AG04449 (cell line): ENCODE measurements at regions of chr22 and their contacts with region 1.

Region 1: GRCh38 chr22:36065775-36066559 is 37.3 kb upstream of the RBFOX2 start:
- DNase-seq: peak; percentile 73
- H3K4me3 ChIP-seq: peak overlapping the region; percentile 62
- CTCF ChIP-seq: peak; percentile 84

Region 2: DNA sequence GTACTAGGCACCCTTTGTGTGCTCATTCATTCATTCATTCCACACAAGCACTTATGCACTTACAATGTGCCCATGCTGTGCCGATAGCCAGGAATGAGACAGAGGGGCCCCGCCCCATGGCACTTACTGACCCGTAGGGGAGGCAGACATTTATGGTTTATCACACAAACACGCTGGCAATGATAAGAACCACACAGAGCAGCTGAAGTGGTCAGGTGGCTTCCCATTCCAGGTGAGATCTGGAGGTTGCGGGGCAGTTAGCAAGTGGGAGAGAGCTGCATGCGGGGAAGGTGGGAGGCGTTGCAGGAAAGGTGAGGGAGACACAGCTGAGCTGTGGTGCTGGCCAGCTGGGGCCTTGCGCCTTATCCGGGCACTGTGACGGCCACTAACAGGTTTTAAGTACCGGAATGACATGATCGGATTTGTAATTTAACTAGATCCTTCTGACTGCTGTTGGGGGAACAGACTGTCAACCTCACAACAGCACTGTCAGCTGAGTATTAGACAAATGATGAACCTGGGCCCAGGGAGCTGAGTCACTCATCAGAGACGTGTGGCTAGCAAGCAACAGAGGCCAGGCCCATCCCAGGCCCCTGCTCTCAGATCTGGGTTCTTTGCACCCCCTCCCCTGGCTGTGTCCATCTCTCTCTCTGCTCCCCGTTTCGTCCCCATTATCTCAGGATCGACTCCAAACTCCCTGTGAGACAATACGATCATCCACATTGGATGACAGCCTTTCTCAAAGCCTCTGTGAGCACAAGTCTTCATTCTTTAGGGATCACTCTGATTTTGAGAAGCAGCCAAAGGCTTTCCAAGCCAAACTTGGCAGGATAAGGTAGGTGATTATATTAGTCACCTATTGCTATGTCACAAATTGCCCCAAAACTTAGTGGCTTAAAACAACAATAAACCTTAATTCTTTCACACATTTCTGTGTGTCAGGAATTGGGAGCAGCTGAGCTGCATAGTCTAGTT is 496.9 kb before region 1 on chr22:
- CTCF ChIA-PET with region 1: no interaction called
- POLR2A ChIA-PET with region 1: no interaction called
- DNase-seq: peak; percentile 31
- H3K4me3 ChIP-seq: no peak overlapping the region
- CTCF ChIP-seq: no peak

Region 3: GRCh38 chr22:35739076-35739930 is 326.7 kb before region 1 on chr22:
- CTCF ChIA-PET with region 1: no interaction called
- POLR2A ChIA-PET with region 1: no interaction called
- DNase-seq: no peak
- H3K4me3 ChIP-seq: no peak overlapping the region
- CTCF ChIP-seq: no peak

Region 4: GRCh38 chr22:35900483-35901168 is 165.3 kb before region 1 on chr22:
- CTCF ChIA-PET with region 1: interaction called, 25 read pairs
- POLR2A ChIA-PET with region 1: no interaction called
- DNase-seq: no peak
- H3K4me3 ChIP-seq: no peak overlapping the region
- CTCF ChIP-seq: no peak

Region 5: GRCh38 chr22:35938226-35938625 is 127.7 kb before region 1 on chr22:
- CTCF ChIA-PET with region 1: interaction called, 85 read pairs
- POLR2A ChIA-PET with region 1: no interaction called
- DNase-seq: no peak
- H3K4me3 ChIP-seq: no peak overlapping the region
- CTCF ChIP-seq: no peak

Region 6: GRCh38 chr22:35977136-35977535 is 88.8 kb before region 1 on chr22:
- CTCF ChIA-PET with region 1: interaction called, 21 read pairs
- POLR2A ChIA-PET with region 1: interaction called, 3 read pairs
- DNase-seq: peak; percentile 86
- H3K4me3 ChIP-seq: no peak overlapping the region
- CTCF ChIP-seq: no peak

Region 7: GRCh38 chr22:36017651-36018091 is 48.3 kb before region 1 on chr22:
- CTCF ChIA-PET with region 1: interaction called, 56 read pairs
- POLR2A ChIA-PET with region 1: no interaction called
- DNase-seq: no peak
- H3K4me3 ChIP-seq: no peak overlapping the region
- CTCF ChIP-seq: no peak

Region 8: GRCh38 chr22:36081023-36081431 is 15.1 kb after region 1 on chr22:
- CTCF ChIA-PET with region 1: interaction called, 114 read pairs
- POLR2A ChIA-PET with region 1: interaction called, 3 read pairs
- DNase-seq: peak; percentile 96
- H3K4me3 ChIP-seq: no peak overlapping the region
- CTCF ChIP-seq: no peak

Region 9: GRCh38 chr22:36129486-36130388 is 63.8 kb after region 1 on chr22:
- CTCF ChIA-PET with region 1: interaction called, 61 read pairs
- POLR2A ChIA-PET with region 1: no interaction called
- DNase-seq: no peak
- H3K4me3 ChIP-seq: no peak overlapping the region
- CTCF ChIP-seq: no peak

Region 10: GRCh38 chr22:36541831-36542411 is 476.0 kb after region 1 on chr22:
- CTCF ChIA-PET with region 1: no interaction called
- POLR2A ChIA-PET with region 1: no interaction called
- DNase-seq: peak; percentile 72
- H3K4me3 ChIP-seq: no peak overlapping the region
- CTCF ChIP-seq: no peak